ENCODE measurements at regions of chr1 and their contacts with region 1.

Region 1: GRCh38 chr1:71930556-71930955 is 351.8 kb downstream of the NEGR1 start:
- DNase-seq: no peak
- ATAC-seq: no peak
- H3K4me3 ChIP-seq: no peak overlapping the region
- H3K27ac ChIP-seq: no peak overlapping the region
- H3K4me1 ChIP-seq: no peaks in the 10 kb centered on the region
- H3K27me3 ChIP-seq: no peaks in the 10 kb centered on the region
- CTCF ChIP-seq: no peak
- POLR2A ChIP-seq: no peak

Region 2: DNA sequence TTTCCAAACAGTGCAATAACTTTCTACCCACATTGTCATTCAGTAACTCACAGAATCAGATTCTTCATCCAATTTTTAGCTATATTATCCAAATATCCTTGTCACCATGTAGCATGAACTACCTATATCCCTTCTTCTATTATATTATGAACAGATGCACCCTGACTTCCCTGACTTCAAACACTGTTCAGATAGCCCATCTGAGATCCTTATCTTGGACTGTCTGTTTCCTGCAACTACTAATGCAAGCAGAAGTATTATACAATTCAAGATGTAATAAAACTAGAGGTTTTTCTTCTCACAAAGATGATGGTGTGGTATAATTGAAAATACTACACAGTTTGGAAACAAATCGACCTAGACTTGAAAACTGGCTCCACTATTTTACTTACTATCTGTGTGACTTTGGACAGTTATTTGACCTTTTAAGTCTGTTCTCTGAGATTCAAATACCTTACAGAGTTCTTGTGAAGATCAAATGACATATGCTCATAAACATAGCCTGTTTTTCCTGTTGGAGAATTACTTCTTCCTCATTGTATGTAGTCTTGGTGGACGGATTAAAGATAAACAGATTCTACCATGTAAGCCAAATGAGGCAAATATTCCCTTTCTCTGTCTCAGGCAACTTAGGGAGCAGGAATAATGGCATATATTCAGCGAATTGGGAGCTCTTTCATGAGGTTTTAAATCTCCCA is 441.9 kb before region 1 on chr1:
- intact Hi-C with region 1: loop called in 1 of 10 experiments (anchors 5 kb)
- DNase-seq: no peak
- ATAC-seq: no peak
- H3K4me3 ChIP-seq: no peak overlapping the region
- H3K27ac ChIP-seq: no peak overlapping the region
- H3K4me1 ChIP-seq: peaks cover 0 to 8% (median 0%) of the 10 kb centered on the region in 12 donors
- H3K27me3 ChIP-seq: no peaks in the 10 kb centered on the region
- CTCF ChIP-seq: no peak
- POLR2A ChIP-seq: no peak